BJ (cell line): ENCODE measurements at regions of chr20 and their contacts with region 1.

Region 1: DNA sequence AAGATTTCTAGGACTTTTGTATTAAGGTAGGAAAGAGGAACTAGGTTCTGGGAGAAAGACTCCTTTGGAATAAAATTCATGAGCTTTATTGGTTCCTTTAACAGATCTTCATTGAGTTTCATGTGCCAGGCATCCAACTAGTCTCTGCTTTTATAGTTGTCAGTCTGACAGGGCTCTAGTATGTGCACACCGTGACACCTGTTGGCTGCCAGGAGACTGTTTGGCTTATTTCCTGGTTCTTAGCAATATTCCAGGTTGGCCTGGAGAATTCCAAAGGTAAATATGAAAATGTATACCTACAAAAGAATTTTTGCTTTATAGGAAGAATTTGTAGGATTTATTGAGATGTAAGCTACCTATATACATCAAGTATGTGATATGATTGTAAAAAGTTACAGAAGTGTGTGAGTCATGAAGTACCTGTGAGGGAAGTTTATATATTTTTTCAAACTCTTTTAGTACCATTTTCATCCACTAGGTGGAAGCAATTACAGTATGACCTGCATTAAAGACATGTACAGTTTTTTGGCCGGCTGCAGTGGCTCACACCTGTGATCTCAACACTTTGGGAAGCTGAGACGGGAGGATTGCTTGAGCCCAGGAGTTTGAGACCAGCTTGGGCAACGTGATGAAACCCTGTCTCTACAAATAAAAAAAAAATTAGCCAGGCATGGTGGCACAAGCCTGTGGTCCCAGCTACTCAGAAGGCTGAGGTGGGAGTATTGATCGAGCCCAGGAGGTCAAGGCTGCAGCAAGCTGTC is 35.2 kb downstream of the NDUFAF5 start:
- DNase-seq: peak; percentile 19
- H3K4me3 ChIP-seq: no peak overlapping the region
- H3K27me3 ChIP-seq: no peaks in the 10 kb centered on the region
- CTCF ChIP-seq: peak; percentile 59

Region 2: GRCh38 chr20:13625304-13625979 is 194.6 kb before region 1 on chr20:
- CTCF ChIA-PET with region 1: no interaction called
- POLR2A ChIA-PET with region 1: no interaction called
- DNase-seq: no peak
- H3K4me3 ChIP-seq: no peak overlapping the region
- H3K27me3 ChIP-seq: no peaks in the 10 kb centered on the region
- CTCF ChIP-seq: no peak

Region 3: DNA sequence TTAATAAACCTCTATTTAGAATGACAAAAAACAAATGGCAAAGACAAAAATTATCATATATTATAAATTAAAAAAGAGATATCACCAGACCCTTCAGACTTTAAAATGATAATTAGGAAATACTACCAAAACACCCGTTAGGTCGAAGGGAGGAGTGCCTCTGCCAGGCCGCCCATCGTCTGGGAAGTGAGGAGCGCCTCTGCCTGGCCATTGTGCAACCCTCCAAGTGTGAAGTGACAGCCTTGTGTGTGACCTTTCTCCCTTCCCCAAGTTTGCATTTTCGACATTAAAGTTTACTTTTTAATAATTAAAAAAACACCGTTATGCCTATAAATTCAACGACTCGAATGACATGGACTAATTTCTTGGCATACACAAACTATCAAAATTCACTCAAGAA is 116.8 kb before region 1 on chr20:
- CTCF ChIA-PET with region 1: no interaction called
- POLR2A ChIA-PET with region 1: no interaction called
- DNase-seq: no peak
- H3K4me3 ChIP-seq: no peak overlapping the region
- H3K27me3 ChIP-seq: no peaks in the 10 kb centered on the region
- CTCF ChIP-seq: no peak

Region 4: GRCh38 chr20:13800728-13801134 is 19.3 kb before region 1 on chr20:
- CTCF ChIA-PET with region 1: interaction called, 12 read pairs
- POLR2A ChIA-PET with region 1: no interaction called
- DNase-seq: peak; percentile 41
- H3K4me3 ChIP-seq: no peak overlapping the region
- H3K27me3 ChIP-seq: no peaks in the 10 kb centered on the region
- CTCF ChIP-seq: no peak

Region 5: DNA sequence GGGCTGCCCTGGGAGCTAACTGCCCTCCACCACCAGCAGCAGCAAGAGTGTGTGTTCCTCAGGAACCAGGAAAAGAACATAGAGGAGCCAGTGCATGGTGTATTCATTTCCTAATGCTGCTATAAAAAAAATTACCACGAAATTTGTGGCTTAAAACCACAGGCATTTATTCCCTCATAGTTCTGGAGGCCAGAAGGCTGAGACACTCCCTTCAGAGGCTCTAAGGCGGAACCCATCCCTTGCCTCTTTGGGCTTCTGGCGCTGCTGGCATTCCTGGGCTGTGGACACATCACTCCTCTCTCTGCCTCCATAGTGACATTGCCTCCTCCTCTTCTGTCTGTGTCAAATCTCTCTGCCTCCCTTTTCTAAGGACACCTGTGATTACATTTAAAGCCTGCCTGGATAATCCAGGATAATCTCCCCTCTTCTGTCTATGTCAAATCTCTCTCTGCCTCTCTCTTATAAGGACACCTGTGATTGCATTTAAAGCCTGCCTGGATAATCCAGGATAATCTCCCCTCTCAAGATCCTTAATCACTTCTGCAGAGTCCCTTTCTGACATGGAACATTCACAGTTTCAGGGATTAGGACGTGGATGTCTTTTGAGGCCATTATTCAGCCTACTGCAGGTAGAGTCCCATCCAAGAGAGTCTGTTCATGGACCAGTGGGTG is 19.5 kb after region 1 on chr20:
- CTCF ChIA-PET with region 1: interaction called, 13 read pairs
- POLR2A ChIA-PET with region 1: no interaction called
- DNase-seq: peak; percentile 87
- H3K4me3 ChIP-seq: no peak overlapping the region
- H3K27me3 ChIP-seq: no peaks in the 10 kb centered on the region
- CTCF ChIP-seq: peak; percentile 17; the same call in 1 of the 2 replicates

Region 6: DNA sequence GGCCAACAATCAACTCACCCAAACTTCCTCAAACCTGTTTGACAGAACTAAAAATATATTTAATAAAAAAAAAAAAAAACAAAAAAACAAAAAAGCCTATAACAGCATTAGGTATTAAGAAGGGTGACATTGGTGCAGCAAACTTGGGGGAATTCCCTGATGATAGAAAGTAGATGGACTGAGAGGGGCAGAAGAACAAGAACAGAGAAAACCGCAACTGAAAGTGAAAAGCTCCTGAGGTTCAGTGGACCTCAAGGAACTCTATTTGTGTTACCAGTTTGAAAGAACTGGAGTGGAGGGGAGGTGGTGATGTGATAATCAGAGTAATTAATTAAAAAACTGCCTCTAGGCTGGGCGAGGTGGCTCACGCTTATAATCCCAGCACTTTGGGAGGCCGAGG is 229.0 kb after region 1 on chr20:
- CTCF ChIA-PET with region 1: interaction called, 61 read pairs
- POLR2A ChIA-PET with region 1: interaction called, 3 read pairs
- DNase-seq: no peak
- H3K4me3 ChIP-seq: no peak overlapping the region
- H3K27me3 ChIP-seq: no peaks in the 10 kb centered on the region
- CTCF ChIP-seq: no peak

Region 7: DNA sequence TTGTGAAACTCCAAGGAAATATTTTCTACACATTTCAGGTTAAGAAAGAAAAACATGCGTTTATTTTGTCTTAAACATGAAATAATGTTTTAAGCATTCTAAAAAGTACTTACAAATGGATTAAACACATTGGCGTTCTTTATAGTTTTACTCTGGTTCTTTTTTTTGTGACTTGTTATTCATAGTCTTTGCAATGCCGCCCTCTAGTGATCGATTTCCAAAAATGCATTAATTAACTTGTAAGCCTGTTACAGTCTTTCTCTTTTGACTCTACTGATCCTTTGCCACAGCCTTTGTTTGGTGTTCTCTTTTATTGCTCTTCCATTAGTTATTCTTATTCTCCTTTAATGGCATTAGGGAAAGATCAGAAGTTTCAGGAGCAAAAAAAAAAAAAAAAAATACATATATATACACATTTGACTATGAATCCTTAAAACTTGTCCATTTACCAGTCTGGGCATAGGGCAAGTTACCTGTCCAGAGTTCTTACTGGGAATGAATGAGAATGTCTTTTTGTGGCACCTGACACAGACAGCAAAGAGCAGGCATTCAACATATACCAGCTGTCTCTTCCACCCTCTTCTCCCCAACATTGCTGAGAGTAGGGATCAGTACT is 235.2 kb after region 1 on chr20:
- CTCF ChIA-PET with region 1: interaction called, 61 read pairs
- POLR2A ChIA-PET with region 1: interaction called, 3 read pairs
- DNase-seq: peak; percentile 24
- H3K4me3 ChIP-seq: no peak overlapping the region
- H3K27me3 ChIP-seq: no peaks in the 10 kb centered on the region
- CTCF ChIP-seq: peak; percentile 46

Region 8: GRCh38 chr20:14062171-14062570 is 242.1 kb after region 1 on chr20:
- CTCF ChIA-PET with region 1: interaction called, 10 read pairs
- POLR2A ChIA-PET with region 1: no interaction called
- DNase-seq: no peak
- H3K4me3 ChIP-seq: no peak overlapping the region
- H3K27me3 ChIP-seq: no peaks in the 10 kb centered on the region
- CTCF ChIP-seq: no peak